ENCODE measurements at regions of chr12 and their contacts with region 1.

Region 1: GRCh38 chr12:65863972-65864371 is 39.7 kb downstream of the HMGA2 start:
- DNase-seq: no peak
- ATAC-seq: no peak
- H3K4me3 ChIP-seq: no peak overlapping the region
- H3K27ac ChIP-seq: no peak overlapping the region
- H3K4me1 ChIP-seq: 0 out of 2 replicates have a peak, but pooled peaks cover 3% of the 10 kb centered on the region
- H3K27me3 ChIP-seq: no peaks in the 10 kb centered on the region
- CTCF ChIP-seq: no peak
- EP300 ChIP-seq: no peak
- POLR2A ChIP-seq: no peak
- RAD21 ChIP-seq: no peak

Region 2: DNA sequence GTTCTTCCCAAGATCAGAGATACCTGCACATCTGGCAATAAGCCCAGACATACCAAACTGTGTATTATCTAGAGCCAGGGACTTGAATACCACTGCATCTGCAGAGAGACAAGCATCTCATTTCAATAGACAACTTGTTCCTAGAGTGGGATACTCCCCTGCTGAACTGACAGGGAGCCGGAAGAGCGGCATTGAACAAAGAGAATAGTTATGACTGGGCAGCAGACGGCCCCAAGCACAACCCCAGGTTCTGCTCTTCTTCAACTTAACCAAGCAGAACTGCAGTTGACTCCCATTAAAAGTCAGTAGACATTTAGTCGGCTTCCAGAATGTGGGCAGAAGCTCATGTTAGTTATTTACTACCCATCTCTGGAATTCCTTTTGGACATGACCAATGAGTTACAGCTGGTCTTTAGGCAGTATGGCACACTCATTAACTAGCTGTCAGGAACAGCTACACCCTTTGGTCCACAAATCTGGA is 73.2 kb after region 1 on chr12:
- CTCF ChIA-PET with region 1: no interaction called
- POLR2A ChIA-PET with region 1: no interaction called
- in situ Hi-C with region 1: no loop called
- intact Hi-C with region 1: loop called (anchors 2 kb)
- DNase-seq: peak; percentile 97
- ATAC-seq: peak; percentile 98
- H3K4me3 ChIP-seq: no peak overlapping the region; a peak in 1 of 6 replicates
- H3K27ac ChIP-seq: peak overlapping the region; percentile 70
- H3K4me1 ChIP-seq: peaks cover 85% of the 10 kb centered on the region
- H3K27me3 ChIP-seq: no peaks in the 10 kb centered on the region
- CTCF ChIP-seq: 0 out of 2 replicates have a peak, but pooled peaks have one; percentile 2
- EP300 ChIP-seq: peak in 1 of 2 experiments; percentile 77; a peak in 2 of 4 replicates
- POLR2A ChIP-seq: no peak
- RAD21 ChIP-seq: no peak